HepG2 (cell line): ENCODE measurements at regions of chr14 and their contacts with region 1.

Region 1: DNA sequence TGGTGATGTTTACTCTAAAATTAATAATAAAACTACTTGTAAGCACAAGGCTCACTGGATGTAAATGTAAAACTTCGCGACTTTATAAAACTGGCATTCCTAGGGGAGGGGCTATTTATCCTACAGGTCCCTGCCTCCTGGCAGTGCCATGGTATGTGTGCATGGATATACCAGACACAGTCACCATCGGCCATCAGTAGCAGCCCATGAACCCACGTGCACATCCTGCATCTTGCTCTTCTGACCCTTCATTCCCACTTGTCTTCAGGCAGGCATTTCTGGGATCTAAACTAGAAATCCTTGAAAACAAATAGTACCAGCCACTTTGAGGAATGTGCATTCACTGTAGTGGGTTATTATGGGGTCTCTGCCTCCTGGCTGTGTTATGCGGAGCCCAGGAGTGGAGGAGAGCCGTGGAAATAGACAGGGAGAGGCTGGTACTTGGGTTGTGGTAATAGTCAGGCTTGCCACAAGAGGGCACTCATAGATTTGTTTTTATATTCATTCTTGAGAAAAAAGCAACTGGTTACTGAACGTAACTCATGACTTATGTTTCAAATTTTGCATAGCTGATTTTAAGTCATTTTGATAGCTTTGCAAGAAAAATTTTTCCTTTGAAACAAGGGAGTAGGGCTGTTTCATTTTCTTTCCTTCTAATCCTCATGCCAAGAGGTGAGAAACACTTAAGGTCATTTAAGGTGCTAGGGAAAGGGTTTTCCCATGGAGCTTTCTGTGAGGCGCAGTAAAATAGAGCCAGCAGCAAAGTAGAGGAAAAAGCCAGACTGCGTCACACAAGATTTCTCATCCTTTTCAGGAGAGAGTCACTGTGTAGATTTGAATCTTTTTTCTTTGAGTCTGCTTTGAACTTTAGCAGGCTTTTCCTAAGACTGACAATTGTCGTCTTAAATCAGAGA is 17.4 kb upstream of the GALNT16 start:
- DNase-seq: peak; percentile 60
- ATAC-seq: peak; percentile 77
- H3K4me3 ChIP-seq: no peak overlapping the region
- H3K27ac ChIP-seq: no peak overlapping the region
- H3K4me1 ChIP-seq: no peaks in the 10 kb centered on the region
- H3K27me3 ChIP-seq: no peaks in the 10 kb centered on the region
- CTCF ChIP-seq: peak; percentile 76
- EP300 ChIP-seq: no peak
- POLR2A ChIP-seq: no peak
- RAD21 ChIP-seq: 0 out of 2 replicates have a peak, but pooled peaks have one; percentile 26

Region 2: GRCh38 chr14:69129264-69129880 is 113.2 kb before region 1 on chr14:
- CTCF ChIA-PET with region 1: interaction called, 3 read pairs
- POLR2A ChIA-PET with region 1: no interaction called
- in situ Hi-C with region 1: no loop called
- intact Hi-C with region 1: loop called (anchors 1 kb)
- DNase-seq: peak; percentile 72
- ATAC-seq: peak; percentile 94
- H3K4me3 ChIP-seq: no peak overlapping the region
- H3K27ac ChIP-seq: no peak overlapping the region
- H3K4me1 ChIP-seq: peaks cover 5% of the 10 kb centered on the region
- H3K27me3 ChIP-seq: no peaks in the 10 kb centered on the region
- CTCF ChIP-seq: peak; percentile 91
- EP300 ChIP-seq: no peak
- POLR2A ChIP-seq: no peak
- RAD21 ChIP-seq: peak; percentile 78

Region 3: GRCh38 chr14:69226178-69226577 is 16.4 kb before region 1 on chr14:
- CTCF ChIA-PET with region 1: no interaction called
- POLR2A ChIA-PET with region 1: no interaction called
- in situ Hi-C with region 1: no loop called
- intact Hi-C with region 1: no loop called
- DNase-seq: no peak
- ATAC-seq: no peak
- H3K4me3 ChIP-seq: no peak overlapping the region
- H3K27ac ChIP-seq: no peak overlapping the region
- H3K4me1 ChIP-seq: no peaks in the 10 kb centered on the region
- H3K27me3 ChIP-seq: no peaks in the 10 kb centered on the region
- CTCF ChIP-seq: no peak
- EP300 ChIP-seq: no peak
- POLR2A ChIP-seq: no peak
- RAD21 ChIP-seq: no peak

Region 4: GRCh38 chr14:69288011-69288771 is 45.6 kb after region 1 on chr14:
- CTCF ChIA-PET with region 1: interaction called, 5 read pairs
- POLR2A ChIA-PET with region 1: no interaction called
- in situ Hi-C with region 1: no loop called
- intact Hi-C with region 1: loop called (anchors 1 kb)
- DNase-seq: peak; percentile 23
- ATAC-seq: peak; percentile 78
- H3K4me3 ChIP-seq: no peak overlapping the region
- H3K27ac ChIP-seq: no peak overlapping the region
- H3K4me1 ChIP-seq: peaks cover 25% of the 10 kb centered on the region
- H3K27me3 ChIP-seq: 0 out of 5 replicates have a peak, but pooled peaks cover 0 to 2% of the 10 kb centered on the region in 2 experiments
- CTCF ChIP-seq: peak; percentile 67
- EP300 ChIP-seq: no peak
- POLR2A ChIP-seq: no peak
- RAD21 ChIP-seq: no peak

Region 5: DNA sequence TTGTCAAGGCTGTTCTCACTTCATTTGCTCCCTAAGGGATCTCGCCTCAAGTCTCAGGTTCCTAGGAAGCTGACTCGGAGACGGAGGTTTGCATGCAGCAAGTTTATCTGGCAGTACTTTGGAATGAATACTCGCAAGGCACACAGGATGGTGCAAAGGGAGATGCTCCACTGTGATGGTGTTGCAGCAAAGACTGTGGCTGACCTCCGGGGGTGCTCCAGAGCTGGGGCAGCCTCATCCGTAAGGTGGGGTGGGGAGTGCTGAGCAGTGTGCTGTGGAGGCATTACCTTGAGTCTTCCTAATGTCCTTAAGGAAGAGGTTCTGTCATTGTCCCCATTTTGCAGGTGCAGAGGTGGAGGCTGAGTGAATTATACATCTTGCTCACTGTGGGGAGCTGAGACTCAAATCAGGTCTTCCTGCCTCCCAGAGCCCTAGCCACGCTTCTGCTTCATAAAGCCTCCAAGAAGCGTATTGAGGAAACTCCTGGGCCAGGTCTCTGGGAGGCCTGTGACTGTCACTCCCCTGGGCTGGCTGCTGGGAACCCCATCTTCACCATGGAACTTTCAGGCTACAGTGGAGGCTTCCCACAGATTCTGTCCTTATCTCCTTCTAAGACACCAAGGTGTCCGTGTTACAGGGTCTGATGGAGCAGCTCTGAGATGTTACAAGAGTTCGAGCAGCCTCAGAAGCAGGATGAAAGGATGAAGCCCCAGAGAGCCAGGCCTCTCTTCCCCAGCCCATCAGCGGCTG is 56.9 kb after region 1 on chr14:
- CTCF ChIA-PET with region 1: no interaction called
- POLR2A ChIA-PET with region 1: no interaction called
- in situ Hi-C with region 1: no loop called
- intact Hi-C with region 1: no loop called
- DNase-seq: no peak
- ATAC-seq: peak; percentile 46; the same call in 1 of the 3 replicates
- H3K4me3 ChIP-seq: no peak overlapping the region
- H3K27ac ChIP-seq: no peak overlapping the region
- H3K4me1 ChIP-seq: no peaks in the 10 kb centered on the region
- H3K27me3 ChIP-seq: peaks cover 2 to 30% of the 10 kb centered on the region in 2 experiments
- CTCF ChIP-seq: no peak
- EP300 ChIP-seq: no peak
- POLR2A ChIP-seq: no peak
- RAD21 ChIP-seq: no peak

Region 6: GRCh38 chr14:69346710-69347109 is 104.1 kb after region 1 on chr14:
- CTCF ChIA-PET with region 1: interaction called, 11 read pairs
- POLR2A ChIA-PET with region 1: no interaction called
- in situ Hi-C with region 1: loop called (anchors 5 kb)
- intact Hi-C with region 1: loop called (anchors 2 kb)
- DNase-seq: no peak
- ATAC-seq: peak; percentile 90
- H3K4me3 ChIP-seq: no peak overlapping the region
- H3K27ac ChIP-seq: no peak overlapping the region
- H3K4me1 ChIP-seq: no peaks in the 10 kb centered on the region
- H3K27me3 ChIP-seq: peaks cover 0 to 22% of the 10 kb centered on the region in 2 experiments; a peak in 3 of 5 replicates
- CTCF ChIP-seq: peak; percentile 82
- EP300 ChIP-seq: no peak
- POLR2A ChIP-seq: no peak
- RAD21 ChIP-seq: peak; percentile 51; the same call in 1 of the 2 replicates

Region 7: DNA sequence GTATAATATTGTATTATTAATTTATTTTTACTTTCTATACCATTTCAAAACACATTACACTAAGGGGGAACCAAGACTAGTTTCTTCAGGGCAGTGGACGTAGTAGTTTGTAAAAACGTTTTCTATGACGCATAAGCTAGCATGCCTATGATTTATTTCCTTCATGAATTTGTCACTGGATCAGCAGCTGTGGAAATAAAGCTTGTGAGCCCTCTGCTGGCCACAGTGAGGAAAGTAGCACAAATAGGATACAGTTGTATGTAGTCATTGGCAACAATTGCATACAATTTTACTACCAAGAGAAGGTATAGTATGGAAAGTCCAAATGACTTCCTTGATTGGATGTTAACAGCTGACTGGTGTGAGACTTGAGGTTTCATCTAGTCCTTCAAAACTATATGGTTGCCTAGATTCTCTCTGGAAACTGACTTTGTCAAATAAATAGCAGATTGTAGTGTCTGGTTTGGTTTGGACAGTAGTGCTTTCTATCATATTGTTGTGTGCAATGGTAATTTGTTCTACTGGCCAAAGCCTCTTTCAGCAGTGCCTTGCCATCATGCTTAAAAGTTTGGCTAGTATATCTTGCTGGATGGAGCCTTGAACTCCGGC is 217.6 kb after region 1 on chr14:
- CTCF ChIA-PET with region 1: interaction called, 12 read pairs
- POLR2A ChIA-PET with region 1: no interaction called
- in situ Hi-C with region 1: no loop called
- intact Hi-C with region 1: loop called (anchors 1 kb)
- DNase-seq: peak; percentile 73
- ATAC-seq: peak; percentile 79
- H3K4me3 ChIP-seq: no peak overlapping the region
- H3K27ac ChIP-seq: no peak overlapping the region
- H3K4me1 ChIP-seq: no peaks in the 10 kb centered on the region
- H3K27me3 ChIP-seq: no peaks in the 10 kb centered on the region
- CTCF ChIP-seq: peak; percentile 79
- EP300 ChIP-seq: no peak
- POLR2A ChIP-seq: no peak
- RAD21 ChIP-seq: peak; percentile 59

Region 8: DNA sequence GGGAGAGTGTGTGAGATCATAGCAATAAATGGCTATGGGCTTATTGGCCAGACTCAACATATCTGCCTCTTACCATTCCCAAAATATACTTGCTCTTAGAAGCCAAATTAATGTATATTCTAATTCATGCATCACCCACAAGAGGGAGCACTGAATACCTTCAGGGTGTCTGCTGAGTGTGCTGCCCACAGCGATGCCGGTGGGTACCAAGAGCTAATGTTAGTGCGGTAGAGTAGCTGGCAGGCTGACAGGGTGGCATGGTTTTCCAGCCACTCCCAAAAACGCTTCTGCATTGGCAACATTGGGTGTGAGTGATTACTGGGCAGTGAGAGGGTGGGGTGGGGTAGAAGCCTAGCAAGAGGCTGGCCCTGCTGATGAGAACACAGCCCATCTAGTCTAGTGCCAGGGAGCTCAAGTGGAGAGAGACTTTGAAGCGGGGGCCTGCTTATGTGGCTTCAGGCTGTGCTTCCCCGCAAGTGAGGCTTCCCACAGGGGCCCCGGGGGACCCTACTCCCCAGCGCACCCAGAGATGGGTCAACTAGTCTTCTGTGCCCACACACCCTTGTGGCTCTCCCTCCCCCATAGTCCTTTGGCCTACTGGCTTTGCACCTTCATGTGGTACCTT is 232.7 kb after region 1 on chr14:
- CTCF ChIA-PET with region 1: interaction called, 3 read pairs
- POLR2A ChIA-PET with region 1: no interaction called
- in situ Hi-C with region 1: no loop called
- intact Hi-C with region 1: loop called (anchors 5 kb)
- DNase-seq: peak; percentile 19
- ATAC-seq: peak; percentile 76
- H3K4me3 ChIP-seq: no peak overlapping the region
- H3K27ac ChIP-seq: no peak overlapping the region
- H3K4me1 ChIP-seq: 0 out of 2 replicates have a peak, but pooled peaks cover 6% of the 10 kb centered on the region
- H3K27me3 ChIP-seq: no peaks in the 10 kb centered on the region; a peak in 1 of 5 replicates
- CTCF ChIP-seq: peak; percentile 40
- EP300 ChIP-seq: no peak
- POLR2A ChIP-seq: no peak
- RAD21 ChIP-seq: no peak

Region 9: GRCh38 chr14:69574263-69574953 is 331.8 kb after region 1 on chr14 and contains the start of gene CCDC177:
- CTCF ChIA-PET with region 1: no interaction called
- POLR2A ChIA-PET with region 1: no interaction called
- in situ Hi-C with region 1: no loop called
- intact Hi-C with region 1: loop called (anchors 2 kb)
- DNase-seq: peak; percentile 28
- ATAC-seq: peak; percentile 79
- H3K4me3 ChIP-seq: peak within 1 kb of the TSS; percentile 45 to 61 (median 46); a peak in 4 of 6 replicates
- H3K27ac ChIP-seq: no peak within 1 kb of the TSS
- H3K4me1 ChIP-seq: peaks cover 35% of the 10 kb centered on the region
- H3K27me3 ChIP-seq: peaks cover 0 to 62% of the 10 kb centered on the region in 2 experiments
- CTCF ChIP-seq: peak; percentile 85
- EP300 ChIP-seq: no peak
- POLR2A ChIP-seq: no peak
- RAD21 ChIP-seq: peak; percentile 44; the same call in 1 of the 2 replicates
- total RNA-seq, gene CCDC177: not detected in 2 replicates